ENCODE measurements at regions of chr22 and their contacts with region 1.

Region 1: GRCh38 chr22:20156611-20157429 is 6.0 kb upstream of the CCDC188 start:
- DNase-seq: peak; percentile 85 to 87
- H3K4me3 ChIP-seq: no peak overlapping the region
- H3K27ac ChIP-seq: no peak overlapping the region
- H3K4me1 ChIP-seq: peaks cover 0 to 4% of the 10 kb centered on the region in 2 donors
- H3K27me3 ChIP-seq: no peaks in the 10 kb centered on the region
- CTCF ChIP-seq: peak; percentile 96 to 100 (median 98)
- POLR2A ChIP-seq: no peak

Region 2: GRCh38 chr22:19022755-19023154 is 1134.1 kb before region 1 on chr22:
- intact Hi-C with region 1: no loop called
- DNase-seq: no peak
- H3K4me3 ChIP-seq: no peak overlapping the region
- H3K27ac ChIP-seq: no peak overlapping the region
- H3K4me1 ChIP-seq: no peaks in the 10 kb centered on the region
- H3K27me3 ChIP-seq: no peaks in the 10 kb centered on the region
- CTCF ChIP-seq: no peak
- POLR2A ChIP-seq: no peak

Region 3: DNA sequence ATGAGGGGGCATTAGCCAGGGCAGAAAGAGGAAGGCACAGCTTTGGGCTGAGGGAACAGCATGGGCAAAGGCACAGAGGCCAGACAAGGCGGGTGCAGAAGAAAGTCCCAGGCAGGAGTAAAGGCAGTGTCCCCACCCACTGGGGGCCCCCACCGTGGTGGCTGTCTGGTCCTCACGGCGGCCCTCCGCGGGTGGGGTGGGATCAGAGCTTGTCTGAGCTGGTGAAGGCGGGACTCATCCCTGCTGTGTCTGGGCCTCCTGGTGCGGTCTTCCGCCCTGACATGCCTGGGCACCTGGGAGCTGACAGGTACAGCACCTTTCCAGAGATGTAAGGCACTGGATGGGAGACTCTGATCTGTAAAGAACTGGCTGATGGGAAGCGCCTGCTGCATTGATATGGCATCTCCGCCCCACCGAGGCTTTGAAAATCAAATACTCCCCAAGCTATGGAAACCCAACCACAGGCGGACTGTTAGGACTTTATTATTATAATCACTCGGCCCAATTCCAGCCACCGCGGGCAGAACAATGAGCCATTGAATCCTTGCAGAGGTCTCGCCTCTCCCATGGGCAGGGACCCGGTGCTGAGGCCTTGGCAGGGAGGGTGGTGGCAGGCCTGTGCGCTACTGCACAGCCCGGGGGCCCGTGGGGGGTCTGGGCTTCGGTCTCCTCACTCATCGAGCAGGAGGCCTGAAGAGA is 287.9 kb before region 1 on chr22:
- intact Hi-C with region 1: no loop called
- DNase-seq: peak; percentile 0 to 2
- H3K4me3 ChIP-seq: no peak overlapping the region
- H3K27ac ChIP-seq: no peak overlapping the region
- H3K4me1 ChIP-seq: peaks cover 4 to 9% of the 10 kb centered on the region in 2 donors
- H3K27me3 ChIP-seq: no peaks in the 10 kb centered on the region
- CTCF ChIP-seq: no peak
- POLR2A ChIP-seq: no peak

Region 4: GRCh38 chr22:20268279-20269012 is 111.6 kb after region 1 on chr22 and contains the start of gene RTN4R:
- intact Hi-C with region 1: loop called (anchors 5 kb)
- DNase-seq: peak; percentile 74 to 77
- H3K4me3 ChIP-seq: peak within 1 kb of the TSS in 2 of 3 donors; percentile 17 to 54
- H3K27ac ChIP-seq: peak within 1 kb of the TSS in 1 of 3 donors; percentile 10
- H3K4me1 ChIP-seq: peaks cover 11 to 13% of the 10 kb centered on the region in 2 donors
- H3K27me3 ChIP-seq: no peaks in the 10 kb centered on the region
- CTCF ChIP-seq: peak in 5 of 6 experiments; percentile 37 to 94 (median 76)
- POLR2A ChIP-seq: no peak
- total RNA-seq, gene RTN4R: 4.0 to 8.6 (median 5.9) TPM

Region 5: GRCh38 chr22:20279662-20280134 is 122.9 kb after region 1 on chr22:
- intact Hi-C with region 1: loop called (anchors 2 kb)
- DNase-seq: no peak
- H3K4me3 ChIP-seq: no peak overlapping the region
- H3K27ac ChIP-seq: no peak overlapping the region
- H3K4me1 ChIP-seq: no peaks in the 10 kb centered on the region
- H3K27me3 ChIP-seq: no peaks in the 10 kb centered on the region
- CTCF ChIP-seq: no peak
- POLR2A ChIP-seq: no peak

Region 6: GRCh38 chr22:20305931-20306645 is 149.3 kb after region 1 on chr22:
- intact Hi-C with region 1: no loop called
- DNase-seq: no peak
- H3K4me3 ChIP-seq: no peak overlapping the region
- H3K27ac ChIP-seq: no peak overlapping the region
- H3K4me1 ChIP-seq: no peaks in the 10 kb centered on the region
- H3K27me3 ChIP-seq: no peaks in the 10 kb centered on the region
- CTCF ChIP-seq: no peak
- POLR2A ChIP-seq: no peak